Caco-2 (cell line): ENCODE measurements at regions of chr6 and their contacts with region 1.

Region 1: DNA sequence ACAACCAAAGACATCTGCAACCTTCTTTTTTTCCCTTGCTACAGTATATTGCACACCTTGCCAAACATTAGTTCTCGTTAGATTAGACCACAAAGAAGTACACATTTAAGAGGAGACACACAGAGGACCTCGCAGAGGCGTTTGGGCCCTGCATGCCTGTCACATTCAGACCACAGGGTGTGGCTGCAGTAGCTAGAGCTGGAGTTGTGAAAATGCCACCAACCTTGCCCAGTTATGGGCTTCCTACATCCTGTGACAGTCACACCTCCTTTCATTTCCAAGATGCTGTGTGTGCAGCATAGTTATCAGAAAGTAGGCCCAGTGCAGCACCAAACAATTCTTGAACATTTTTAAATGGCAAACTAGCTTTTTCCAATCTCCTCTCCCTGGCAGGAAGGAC is 2.4 kb downstream of the SYNE1 start:
- DNase-seq: peak; percentile 6 to 36
- H3K4me3 ChIP-seq: no peak overlapping the region
- H3K4me3 Mint-ChIP-seq: no peak overlapping the region
- H3K27ac Mint-ChIP-seq: no peak overlapping the region
- H3K4me1 ChIP-seq: peaks cover 25% of the 10 kb centered on the region
- H3K4me1 Mint-ChIP-seq: peaks cover 35% of the 10 kb centered on the region
- H3K27me3 ChIP-seq: no peaks in the 10 kb centered on the region
- H3K27me3 Mint-ChIP-seq: no peaks in the 10 kb centered on the region
- CTCF ChIP-seq: no peak

Region 2: GRCh38 chr6:152572395-152573061 is 62.2 kb before region 1 on chr6:
- CTCF ChIA-PET with region 1: no interaction called
- POLR2A ChIA-PET with region 1: no interaction called
- intact Hi-C with region 1: loop called (anchors 2 kb)
- DNase-seq: no peak
- H3K4me3 ChIP-seq: no peak overlapping the region
- H3K4me3 Mint-ChIP-seq: peak overlapping the region; percentile 9
- H3K27ac Mint-ChIP-seq: no peak overlapping the region
- H3K4me1 ChIP-seq: peaks cover 19% of the 10 kb centered on the region
- H3K4me1 Mint-ChIP-seq: peaks cover 13% of the 10 kb centered on the region
- H3K27me3 ChIP-seq: no peaks in the 10 kb centered on the region
- H3K27me3 Mint-ChIP-seq: no peaks in the 10 kb centered on the region
- CTCF ChIP-seq: no peak

Region 3: GRCh38 chr6:152595505-152595904 is 39.3 kb before region 1 on chr6:
- CTCF ChIA-PET with region 1: no interaction called
- POLR2A ChIA-PET with region 1: no interaction called
- intact Hi-C with region 1: loop called (anchors 1 kb)
- DNase-seq: peak in 1 of 2 experiments; percentile 25
- H3K4me3 ChIP-seq: no peak overlapping the region
- H3K4me3 Mint-ChIP-seq: peak overlapping the region; percentile 61
- H3K27ac Mint-ChIP-seq: peak overlapping the region; percentile 97
- H3K4me1 ChIP-seq: peaks cover 46% of the 10 kb centered on the region
- H3K4me1 Mint-ChIP-seq: peaks cover 31% of the 10 kb centered on the region
- H3K27me3 ChIP-seq: no peaks in the 10 kb centered on the region
- H3K27me3 Mint-ChIP-seq: no peaks in the 10 kb centered on the region
- CTCF ChIP-seq: peak; percentile 43 to 45